ENCODE measurements at regions of chr6 and their contacts with region 1.

Region 1: GRCh38 chr6:70566751-70567382 is at the start of gene SDHAF4:
- DNase-seq: peak; percentile 89 to 96 (median 94)
- ATAC-seq: peak; percentile 100
- H3K4me3 ChIP-seq: peak within 1 kb of the TSS; percentile 88
- H3K4me3 Mint-ChIP-seq: peak within 1 kb of the TSS; percentile 83 to 91 (median 87)
- H3K27ac ChIP-seq: peak within 1 kb of the TSS; percentile 81
- H3K27ac Mint-ChIP-seq: peak within 1 kb of the TSS; percentile 76 to 95 (median 91)
- H3K4me1 ChIP-seq: peaks cover 6 to 8% of the 10 kb centered on the region in 2 donors
- H3K4me1 Mint-ChIP-seq: peaks cover 5 to 32% (median 22%) of the 10 kb centered on the region in 7 donors
- H3K27me3 ChIP-seq: no peaks in the 10 kb centered on the region
- H3K27me3 Mint-ChIP-seq: peaks cover 0 to 2% (median 0%) of the 10 kb centered on the region in 5 donors
- total RNA-seq, gene SDHAF4: 4.7 to 14.5 (median 10.3) TPM

Region 2: GRCh38 chr6:69813508-69813907 is 753.4 kb before region 1 on chr6:
- CTCF ChIA-PET with region 1: no interaction called
- POLR2A ChIA-PET with region 1: no interaction called
- intact Hi-C with region 1: loop called in 1 of 2 experiments (anchors 5 kb)
- DNase-seq: peak in 1 of 9 donors; percentile 15
- ATAC-seq: peak; percentile 79
- H3K4me3 ChIP-seq: peak overlapping the region; percentile 14
- H3K4me3 Mint-ChIP-seq: peak overlapping the region; percentile 25 to 74 (median 62)
- H3K27ac ChIP-seq: peak overlapping the region; percentile 65
- H3K27ac Mint-ChIP-seq: peak overlapping the region; percentile 71 to 98 (median 87)
- H3K4me1 ChIP-seq: peaks cover 26 to 49% of the 10 kb centered on the region in 2 donors
- H3K4me1 Mint-ChIP-seq: peaks cover 35 to 71% (median 59%) of the 10 kb centered on the region in 7 donors
- H3K27me3 ChIP-seq: no peaks in the 10 kb centered on the region
- H3K27me3 Mint-ChIP-seq: no peaks in the 10 kb centered on the region

Region 3: GRCh38 chr6:70413114-70413991 is 153.5 kb before region 1 on chr6 and contains the start of gene FAM135A:
- CTCF ChIA-PET with region 1: no interaction called
- POLR2A ChIA-PET with region 1: interaction called, 4 read pairs
- intact Hi-C with region 1: loop called (anchors 1 kb)
- DNase-seq: peak; percentile 80 to 94 (median 89)
- ATAC-seq: peak; percentile 98
- H3K4me3 ChIP-seq: peak within 1 kb of the TSS; percentile 79
- H3K4me3 Mint-ChIP-seq: peak within 1 kb of the TSS; percentile 91 to 99 (median 94)
- H3K27ac ChIP-seq: peak within 1 kb of the TSS; percentile 69
- H3K27ac Mint-ChIP-seq: peak within 1 kb of the TSS; percentile 82 to 96 (median 92)
- H3K4me1 ChIP-seq: peaks cover 0 to 4% of the 10 kb centered on the region in 2 donors
- H3K4me1 Mint-ChIP-seq: peaks cover 7 to 27% (median 26%) of the 10 kb centered on the region in 7 donors
- H3K27me3 ChIP-seq: no peaks in the 10 kb centered on the region
- H3K27me3 Mint-ChIP-seq: peaks cover 0 to 18% (median 0%) of the 10 kb centered on the region in 5 donors
- total RNA-seq, gene FAM135A: 6.8 to 15.4 (median 12.3) TPM

Region 4: DNA sequence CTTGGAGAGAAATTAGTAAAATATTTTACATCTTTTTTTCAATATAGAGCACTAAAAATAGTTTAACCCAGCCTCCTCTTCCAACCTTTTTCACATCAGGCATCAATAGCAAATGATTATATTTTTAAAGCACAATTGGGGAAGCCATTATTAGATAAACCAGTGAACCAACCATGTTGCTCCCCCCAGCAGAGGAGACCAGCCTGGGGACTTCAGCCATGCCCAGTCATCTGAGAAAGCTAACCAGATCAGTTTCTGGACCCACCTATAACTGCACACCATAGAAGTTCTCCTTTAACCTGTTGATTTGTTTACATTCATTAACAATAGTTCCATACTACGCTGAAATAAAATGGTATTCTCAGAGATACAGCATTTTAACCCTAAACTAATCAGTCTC is 13.9 kb before region 1 on chr6:
- CTCF ChIA-PET with region 1: interaction called, 5 read pairs
- POLR2A ChIA-PET with region 1: interaction called, 6 read pairs
- intact Hi-C with region 1: loop called in 1 of 2 experiments (anchors 2 kb)
- DNase-seq: no peak
- ATAC-seq: no peak
- H3K4me3 ChIP-seq: no peak overlapping the region
- H3K4me3 Mint-ChIP-seq: no peak overlapping the region
- H3K27ac ChIP-seq: no peak overlapping the region
- H3K27ac Mint-ChIP-seq: no peak overlapping the region
- H3K4me1 ChIP-seq: no peaks in the 10 kb centered on the region
- H3K4me1 Mint-ChIP-seq: peaks cover 0 to 5% (median 0%) of the 10 kb centered on the region in 7 donors
- H3K27me3 ChIP-seq: no peaks in the 10 kb centered on the region
- H3K27me3 Mint-ChIP-seq: peaks cover 0 to 6% (median 0%) of the 10 kb centered on the region in 5 donors

Region 5: GRCh38 chr6:70599187-70599586 is 32.3 kb after region 1 on chr6:
- CTCF ChIA-PET with region 1: no interaction called
- POLR2A ChIA-PET with region 1: no interaction called
- intact Hi-C with region 1: loop called in 1 of 2 experiments (anchors 5 kb)
- DNase-seq: peak in 2 of 9 donors; percentile 5 to 34
- ATAC-seq: peak; percentile 41
- H3K4me3 ChIP-seq: no peak overlapping the region
- H3K4me3 Mint-ChIP-seq: peak overlapping the region in 1 of 10 donors; percentile 44
- H3K27ac ChIP-seq: no peak overlapping the region
- H3K27ac Mint-ChIP-seq: peak overlapping the region in 2 of 9 donors; percentile 30 to 35
- H3K4me1 ChIP-seq: no peaks in the 10 kb centered on the region
- H3K4me1 Mint-ChIP-seq: peaks cover 0 to 14% (median 5%) of the 10 kb centered on the region in 7 donors
- H3K27me3 ChIP-seq: no peaks in the 10 kb centered on the region
- H3K27me3 Mint-ChIP-seq: peaks cover 0 to 5% (median 0%) of the 10 kb centered on the region in 5 donors

Region 6: DNA sequence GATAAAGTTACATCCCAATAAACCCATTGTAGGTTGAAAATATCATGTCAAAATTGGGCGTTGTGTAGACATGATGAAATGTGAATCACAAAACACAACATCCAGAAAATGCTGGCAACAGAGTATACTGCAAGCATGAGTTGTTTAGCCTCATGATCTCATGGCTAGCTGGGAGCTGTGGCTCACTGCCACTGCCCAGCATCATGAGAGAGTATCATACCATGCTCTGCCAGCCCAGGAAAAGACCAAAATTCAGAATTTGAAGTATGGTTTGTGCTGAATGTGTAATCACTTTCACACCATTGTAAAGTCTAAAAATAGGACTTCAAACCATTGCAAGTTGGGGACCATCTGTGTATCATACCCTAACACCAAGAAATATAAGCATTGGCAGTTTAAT is 55.6 kb after region 1 on chr6:
- CTCF ChIA-PET with region 1: no interaction called
- POLR2A ChIA-PET with region 1: no interaction called
- intact Hi-C with region 1: no loop called
- DNase-seq: no peak
- ATAC-seq: no peak
- H3K4me3 ChIP-seq: no peak overlapping the region
- H3K4me3 Mint-ChIP-seq: no peak overlapping the region
- H3K27ac ChIP-seq: no peak overlapping the region
- H3K27ac Mint-ChIP-seq: no peak overlapping the region
- H3K4me1 ChIP-seq: no peaks in the 10 kb centered on the region
- H3K4me1 Mint-ChIP-seq: peaks cover 0 to 4% (median 0%) of the 10 kb centered on the region in 7 donors
- H3K27me3 ChIP-seq: no peaks in the 10 kb centered on the region
- H3K27me3 Mint-ChIP-seq: peaks cover 0 to 7% (median 0%) of the 10 kb centered on the region in 5 donors

Region 7: DNA sequence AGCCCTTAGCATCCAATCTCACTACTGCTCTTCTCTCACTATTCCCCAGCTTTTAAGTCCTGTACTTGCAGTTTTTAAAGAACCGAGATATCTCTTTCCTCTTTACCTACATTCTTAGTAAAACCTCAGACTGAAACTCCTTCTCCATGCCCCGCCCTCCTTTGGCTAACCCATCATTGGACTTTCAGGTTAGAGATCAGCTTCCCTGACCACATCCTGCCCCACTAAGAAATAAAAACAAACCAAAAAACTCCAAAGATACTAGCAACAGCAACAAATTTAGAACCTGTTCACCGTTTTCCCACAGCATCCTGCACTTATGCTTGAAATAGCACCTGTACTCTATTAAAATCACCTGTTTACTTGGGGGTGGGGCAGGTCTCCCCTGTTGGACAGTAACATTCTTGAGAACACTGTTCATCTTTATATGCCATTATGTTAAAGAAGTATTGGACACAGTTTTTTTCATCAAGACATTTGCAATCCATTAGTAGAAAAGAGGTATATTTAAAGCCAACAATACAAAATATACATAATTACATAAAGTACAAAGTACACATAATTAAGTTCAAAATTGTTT is 84.5 kb after region 1 on chr6:
- CTCF ChIA-PET with region 1: no interaction called
- POLR2A ChIA-PET with region 1: no interaction called
- intact Hi-C with region 1: loop called in 1 of 2 experiments (anchors 1 kb)
- DNase-seq: peak in 8 of 9 donors; percentile 24 to 68 (median 58)
- ATAC-seq: peak; percentile 82
- H3K4me3 ChIP-seq: peak overlapping the region; percentile 18
- H3K4me3 Mint-ChIP-seq: peak overlapping the region; percentile 25 to 75 (median 58)
- H3K27ac ChIP-seq: peak overlapping the region; percentile 6
- H3K27ac Mint-ChIP-seq: peak overlapping the region; percentile 32 to 84 (median 76)
- H3K4me1 ChIP-seq: peaks cover 21 to 22% of the 10 kb centered on the region in 2 donors
- H3K4me1 Mint-ChIP-seq: peaks cover 13 to 52% (median 25%) of the 10 kb centered on the region in 7 donors
- H3K27me3 ChIP-seq: no peaks in the 10 kb centered on the region
- H3K27me3 Mint-ChIP-seq: no peaks in the 10 kb centered on the region

Region 8: GRCh38 chr6:70667711-70668498 is 101.0 kb after region 1 on chr6 and contains the start of gene SMAP1:
- CTCF ChIA-PET with region 1: no interaction called
- POLR2A ChIA-PET with region 1: interaction called, 35 read pairs
- intact Hi-C with region 1: loop called (anchors 1 kb)
- DNase-seq: peak; percentile 84 to 96 (median 90)
- ATAC-seq: peak; percentile 97
- H3K4me3 ChIP-seq: peak within 1 kb of the TSS; percentile 69
- H3K4me3 Mint-ChIP-seq: peak within 1 kb of the TSS; percentile 83 to 96 (median 90)
- H3K27ac ChIP-seq: peak within 1 kb of the TSS; percentile 82
- H3K27ac Mint-ChIP-seq: peak within 1 kb of the TSS; percentile 92 to 98 (median 95)
- H3K4me1 ChIP-seq: peaks cover 23 to 26% of the 10 kb centered on the region in 2 donors
- H3K4me1 Mint-ChIP-seq: peaks cover 40 to 58% (median 55%) of the 10 kb centered on the region in 7 donors
- H3K27me3 ChIP-seq: no peaks in the 10 kb centered on the region
- H3K27me3 Mint-ChIP-seq: no peaks in the 10 kb centered on the region
- total RNA-seq, gene SMAP1: 18.7 to 45.7 (median 20.8) TPM